B cell (primary cell): ENCODE measurements at regions of chr2 and their contacts with region 1.

Region 1: GRCh38 chr2:43537137-43537536 is 58.7 kb downstream of the THADA start:
- DNase-seq: peak; percentile 75
- ATAC-seq: peak; percentile 70
- H3K4me3 ChIP-seq: peak overlapping the region in 1 of 5 experiments; percentile 21
- H3K4me3 Mint-ChIP-seq: peak overlapping the region; percentile 66
- H3K27ac ChIP-seq: peak overlapping the region; percentile 42 to 75
- H3K27ac Mint-ChIP-seq: peak overlapping the region; percentile 68
- H3K4me1 ChIP-seq: peaks cover 12 to 24% of the 10 kb centered on the region in 2 donors
- H3K4me1 Mint-ChIP-seq: peaks cover 26% of the 10 kb centered on the region
- H3K27me3 ChIP-seq: no peaks in the 10 kb centered on the region
- H3K27me3 Mint-ChIP-seq: no peaks in the 10 kb centered on the region
- CTCF ChIP-seq: no peak

Region 2: GRCh38 chr2:42376758-42377157 is 1160.4 kb before region 1 on chr2:
- CTCF ChIA-PET with region 1: no interaction called
- POLR2A ChIA-PET with region 1: no interaction called
- intact Hi-C with region 1: no loop called
- DNase-seq: no peak
- ATAC-seq: no peak
- H3K4me3 ChIP-seq: no peak overlapping the region
- H3K4me3 Mint-ChIP-seq: no peak overlapping the region
- H3K27ac ChIP-seq: no peak overlapping the region
- H3K27ac Mint-ChIP-seq: no peak overlapping the region
- H3K4me1 ChIP-seq: no peaks in the 10 kb centered on the region
- H3K4me1 Mint-ChIP-seq: no peaks in the 10 kb centered on the region
- H3K27me3 ChIP-seq: peaks cover 0 to under 1% (median 0%) of the 10 kb centered on the region in 4 experiments
- H3K27me3 Mint-ChIP-seq: peaks cover 13% of the 10 kb centered on the region
- CTCF ChIP-seq: no peak

Region 3: GRCh38 chr2:42828487-42829425 is 708.4 kb before region 1 on chr2:
- CTCF ChIA-PET with region 1: interaction called, 18 read pairs
- POLR2A ChIA-PET with region 1: interaction called, 4 read pairs
- intact Hi-C with region 1: loop called (anchors 1 kb)
- DNase-seq: peak; percentile 82
- ATAC-seq: peak; percentile 95
- H3K4me3 ChIP-seq: no peak overlapping the region
- H3K4me3 Mint-ChIP-seq: peak overlapping the region; percentile 39
- H3K27ac ChIP-seq: no peak overlapping the region
- H3K27ac Mint-ChIP-seq: peak overlapping the region; percentile 26
- H3K4me1 ChIP-seq: peaks cover 8 to 13% of the 10 kb centered on the region in 2 donors
- H3K4me1 Mint-ChIP-seq: peaks cover 16% of the 10 kb centered on the region
- H3K27me3 ChIP-seq: no peaks in the 10 kb centered on the region
- H3K27me3 Mint-ChIP-seq: peaks cover 3% of the 10 kb centered on the region
- CTCF ChIP-seq: peak; percentile 92

Region 4: GRCh38 chr2:43412121-43412753 is 124.9 kb before region 1 on chr2:
- CTCF ChIA-PET with region 1: no interaction called
- POLR2A ChIA-PET with region 1: no interaction called
- intact Hi-C with region 1: no loop called
- DNase-seq: no peak
- ATAC-seq: no peak
- H3K4me3 ChIP-seq: no peak overlapping the region
- H3K4me3 Mint-ChIP-seq: no peak overlapping the region
- H3K27ac ChIP-seq: no peak overlapping the region
- H3K27ac Mint-ChIP-seq: no peak overlapping the region
- H3K4me1 ChIP-seq: peaks cover 10 to 13% of the 10 kb centered on the region in 2 donors
- H3K4me1 Mint-ChIP-seq: peaks cover 19% of the 10 kb centered on the region
- H3K27me3 ChIP-seq: no peaks in the 10 kb centered on the region
- H3K27me3 Mint-ChIP-seq: no peaks in the 10 kb centered on the region
- CTCF ChIP-seq: no peak

Region 5: GRCh38 chr2:43685357-43685756 is 148.2 kb after region 1 on chr2:
- CTCF ChIA-PET with region 1: no interaction called
- POLR2A ChIA-PET with region 1: no interaction called
- intact Hi-C with region 1: no loop called
- DNase-seq: no peak
- ATAC-seq: no peak
- H3K4me3 ChIP-seq: no peak overlapping the region
- H3K4me3 Mint-ChIP-seq: no peak overlapping the region
- H3K27ac ChIP-seq: no peak overlapping the region
- H3K27ac Mint-ChIP-seq: no peak overlapping the region
- H3K4me1 ChIP-seq: no peaks in the 10 kb centered on the region
- H3K4me1 Mint-ChIP-seq: peaks cover 2% of the 10 kb centered on the region
- H3K27me3 ChIP-seq: peaks cover 0 to 4% (median 0%) of the 10 kb centered on the region in 4 experiments
- H3K27me3 Mint-ChIP-seq: peaks cover 24% of the 10 kb centered on the region
- CTCF ChIP-seq: no peak